ENCODE measurements at regions of chr4 and their contacts with region 1.

Region 1: DNA sequence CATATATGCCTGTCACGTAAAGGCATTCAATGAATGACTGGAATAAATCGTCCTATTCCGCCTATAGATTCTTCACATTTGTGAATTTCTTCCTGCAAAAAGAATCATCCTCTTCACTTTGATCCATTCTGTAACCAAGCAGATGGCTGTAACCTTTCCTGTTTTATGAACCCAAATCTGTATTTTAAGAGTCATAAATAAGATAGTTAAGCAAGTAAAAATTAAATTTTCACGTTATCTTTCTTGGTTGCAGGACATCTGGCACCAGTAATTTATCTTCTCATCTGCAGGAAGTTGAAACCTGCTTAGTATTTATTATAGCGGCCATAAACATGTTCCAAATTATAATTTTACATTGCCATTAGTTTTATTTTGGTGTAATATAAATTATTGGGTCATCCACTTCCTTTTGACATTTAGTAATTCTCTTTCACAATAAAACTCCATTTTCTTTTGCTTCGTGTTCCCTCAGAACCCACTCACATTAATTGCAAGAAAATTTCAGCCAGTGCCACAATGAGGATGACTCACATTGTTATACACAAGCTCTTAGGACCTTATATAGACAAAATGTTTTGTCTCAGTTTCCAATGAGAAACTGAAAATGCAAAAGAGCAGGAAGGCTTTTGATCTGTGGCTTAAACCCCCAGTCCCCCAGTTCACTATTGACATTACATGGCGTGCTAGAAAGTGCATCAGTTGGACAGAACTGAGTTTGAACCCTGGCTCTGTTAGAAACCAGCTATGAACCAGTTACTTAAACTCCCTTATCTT is 51.1 kb downstream of the TMEM156 start:
- DNase-seq: no peak
- H3K4me3 Mint-ChIP-seq: peak overlapping the region; percentile 25
- H3K27ac Mint-ChIP-seq: peak overlapping the region; percentile 81
- H3K4me1 Mint-ChIP-seq: peaks cover 59% of the 10 kb centered on the region
- H3K27me3 Mint-ChIP-seq: no peaks in the 10 kb centered on the region

Region 2: DNA sequence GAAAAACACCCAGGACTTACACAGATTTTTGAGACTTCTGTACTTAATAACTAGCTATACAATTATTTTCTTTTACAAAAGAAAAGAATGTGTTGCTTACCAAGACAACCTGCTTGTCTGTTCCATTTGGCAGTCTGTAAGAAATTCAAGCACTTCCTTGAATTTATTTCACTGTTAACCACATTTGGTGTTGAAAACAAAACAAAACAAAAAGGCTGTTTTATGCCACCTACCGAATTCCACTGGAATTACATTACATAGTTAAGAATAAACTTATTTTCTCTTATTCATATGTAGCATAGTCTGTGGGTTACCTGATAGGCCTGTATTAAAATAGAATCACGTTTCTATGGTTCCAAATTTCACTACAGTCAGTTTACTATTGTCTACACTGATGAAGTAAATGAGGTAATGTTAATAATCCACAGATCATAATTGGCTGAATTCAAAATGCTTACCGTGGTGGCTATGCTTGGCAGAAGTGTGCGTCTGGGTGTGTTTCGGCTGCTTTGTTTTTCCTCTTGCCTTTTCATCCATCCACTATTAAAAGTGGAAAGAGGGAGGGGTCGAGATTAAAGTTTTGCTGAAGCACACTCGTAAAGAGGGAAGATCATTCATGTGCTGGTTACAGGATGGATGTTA is 176.3 kb before region 1 on chr4 and contains the start of gene TLR1:
- intact Hi-C with region 1: loop called (anchors 5 kb)
- DNase-seq: no peak
- H3K4me3 Mint-ChIP-seq: peak within 1 kb of the TSS; percentile 81
- H3K27ac Mint-ChIP-seq: peak within 1 kb of the TSS; percentile 87
- H3K4me1 Mint-ChIP-seq: peaks cover 38% of the 10 kb centered on the region
- H3K27me3 Mint-ChIP-seq: no peaks in the 10 kb centered on the region
- total RNA-seq, gene TLR1: 1.9 and 2.7 TPM in 2 replicates

Region 3: DNA sequence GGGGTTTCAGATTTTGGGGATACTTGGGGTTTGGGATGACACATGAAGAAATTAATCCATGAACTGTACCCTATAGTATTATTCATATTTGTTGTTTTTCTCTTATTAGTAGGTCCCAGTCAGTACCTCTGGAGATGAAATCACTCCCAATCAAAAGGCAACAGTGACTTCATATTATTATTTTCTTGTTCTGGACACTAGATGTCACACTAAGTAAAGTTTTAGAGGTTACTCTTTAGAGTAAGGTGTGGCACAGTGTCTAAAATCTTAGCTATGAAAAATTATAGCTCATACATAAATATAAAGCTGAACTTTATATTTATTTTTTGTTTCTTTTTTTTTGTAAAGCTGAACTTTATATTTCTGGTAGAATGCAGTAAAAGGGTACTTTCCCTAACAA is 78.4 kb before region 1 on chr4:
- intact Hi-C with region 1: loop called (anchors 2 kb)
- DNase-seq: no peak
- H3K4me3 Mint-ChIP-seq: no peak overlapping the region
- H3K27ac Mint-ChIP-seq: no peak overlapping the region
- H3K4me1 Mint-ChIP-seq: peaks cover 35% of the 10 kb centered on the region
- H3K27me3 Mint-ChIP-seq: peaks cover 10% of the 10 kb centered on the region

Region 4: DNA sequence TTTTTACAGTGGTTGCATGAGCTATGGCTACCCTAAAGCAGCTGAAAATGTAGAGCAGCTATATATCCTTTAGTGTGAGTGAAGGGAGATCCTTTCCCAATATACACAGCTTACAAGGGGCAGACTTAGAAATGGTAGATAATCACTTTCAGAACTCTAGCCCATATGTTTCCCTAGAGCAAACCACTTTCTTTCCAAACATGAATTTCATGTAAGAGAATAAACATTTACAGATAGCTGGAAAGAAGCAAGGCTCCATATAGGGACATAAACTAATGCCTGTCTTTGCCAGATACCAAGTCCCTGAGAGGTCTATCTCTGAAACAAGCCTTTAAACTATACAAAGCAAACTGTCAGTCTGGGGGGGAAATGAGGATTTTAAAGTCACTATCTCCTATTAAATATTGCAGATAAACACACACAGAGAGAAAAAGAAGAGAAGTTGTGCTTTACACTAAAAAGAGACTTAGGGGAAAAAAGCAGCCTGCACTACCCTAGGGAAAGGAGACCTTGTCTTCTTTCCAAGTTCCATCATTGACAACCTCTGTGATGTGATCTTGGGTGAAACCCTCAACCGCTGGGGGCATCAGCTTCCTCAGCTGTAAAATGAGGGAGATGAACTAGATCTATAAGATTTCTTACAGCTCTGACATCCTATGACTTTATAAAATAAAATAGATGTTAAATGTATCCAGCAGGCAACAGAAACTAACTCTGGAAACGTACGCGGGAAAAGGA is 22.5 kb before region 1 on chr4:
- intact Hi-C with region 1: loop called (anchors 1 kb)
- DNase-seq: no peak
- H3K4me3 Mint-ChIP-seq: peak overlapping the region; percentile 46
- H3K27ac Mint-ChIP-seq: peak overlapping the region; percentile 96
- H3K4me1 Mint-ChIP-seq: peaks cover 62% of the 10 kb centered on the region
- H3K27me3 Mint-ChIP-seq: no peaks in the 10 kb centered on the region

Region 5: DNA sequence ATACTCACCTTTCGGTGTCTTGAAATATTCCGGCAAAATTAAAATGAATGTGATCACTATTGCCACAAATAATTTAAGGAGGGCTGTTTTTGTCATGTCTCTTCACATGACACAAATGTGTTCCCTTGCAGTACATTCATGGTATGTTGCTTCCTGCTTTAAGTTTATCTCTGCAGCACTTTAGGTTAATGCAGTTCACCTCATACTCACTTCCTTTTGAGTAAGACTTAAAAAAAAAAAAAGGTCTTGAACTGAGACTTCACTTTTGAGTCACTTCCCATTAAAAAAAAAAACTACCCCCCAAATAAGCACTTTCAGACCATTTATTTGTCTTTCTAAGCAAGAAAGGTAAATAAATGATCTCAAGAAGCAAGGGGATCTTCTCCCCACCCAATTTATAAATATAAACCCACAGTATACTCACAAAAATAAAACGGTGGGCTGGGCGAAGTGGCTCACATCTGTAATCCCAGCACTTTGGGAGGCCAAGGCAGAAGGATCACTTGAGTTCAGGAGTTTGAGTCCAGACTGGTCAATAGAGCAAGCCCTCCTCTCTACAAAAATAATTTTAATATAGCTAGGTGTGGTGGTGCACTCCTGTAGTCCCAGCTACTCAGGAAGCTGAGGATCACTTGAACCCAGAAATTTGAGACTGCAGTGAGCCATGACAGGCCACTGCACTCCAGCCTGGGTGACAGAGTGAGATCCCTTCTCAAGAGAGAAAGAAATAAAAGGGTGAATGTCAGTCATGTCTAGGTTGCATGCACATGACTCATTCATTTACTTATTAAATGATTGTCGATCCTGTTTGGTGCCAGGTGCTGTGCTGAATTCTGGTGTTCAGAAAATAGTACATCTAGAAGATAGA is 51.4 kb after region 1 on chr4 and contains the start of gene TMEM156:
- intact Hi-C with region 1: loop called (anchors 1 kb)
- DNase-seq: no peak
- H3K4me3 Mint-ChIP-seq: peak within 1 kb of the TSS; percentile 93
- H3K27ac Mint-ChIP-seq: peak within 1 kb of the TSS; percentile 87
- H3K4me1 Mint-ChIP-seq: peaks cover 46% of the 10 kb centered on the region
- H3K27me3 Mint-ChIP-seq: no peaks in the 10 kb centered on the region
- total RNA-seq, gene TMEM156: 27.7 and 29.4 TPM in 2 replicates

Region 6: DNA sequence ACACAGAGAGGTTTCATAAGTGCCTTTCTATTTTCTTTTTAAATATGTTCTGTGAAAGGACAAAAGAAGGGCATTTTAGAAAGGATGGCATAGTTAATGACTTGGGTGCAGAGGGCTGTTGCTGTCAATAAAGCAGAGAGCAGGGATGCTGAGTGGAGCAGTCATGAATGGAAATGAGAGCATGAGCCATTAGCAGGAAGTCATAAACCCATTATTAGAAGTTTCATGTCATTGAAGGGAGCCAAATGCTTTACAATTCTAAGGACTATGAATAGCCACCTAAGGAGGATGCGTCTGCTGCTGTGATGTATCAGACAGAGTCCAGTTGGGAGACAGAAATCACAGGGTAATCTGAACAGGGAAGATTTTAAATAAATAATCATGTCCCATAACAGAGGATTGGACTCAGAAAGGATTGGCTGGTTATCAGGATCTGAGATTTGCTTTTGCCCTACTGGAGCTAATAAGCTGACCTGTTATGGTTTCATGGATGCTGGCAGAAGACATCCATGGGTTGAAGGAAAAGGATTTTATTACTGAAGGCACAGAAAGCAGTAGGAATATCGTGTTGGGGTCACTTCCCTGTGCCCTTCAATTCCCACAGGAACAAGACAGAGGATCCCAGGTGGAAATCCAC is 153.7 kb after region 1 on chr4:
- intact Hi-C with region 1: loop called (anchors 2 kb)
- DNase-seq: no peak
- H3K4me3 Mint-ChIP-seq: no peak overlapping the region
- H3K27ac Mint-ChIP-seq: no peak overlapping the region
- H3K4me1 Mint-ChIP-seq: peaks cover 19% of the 10 kb centered on the region
- H3K27me3 Mint-ChIP-seq: no peaks in the 10 kb centered on the region

Region 7: DNA sequence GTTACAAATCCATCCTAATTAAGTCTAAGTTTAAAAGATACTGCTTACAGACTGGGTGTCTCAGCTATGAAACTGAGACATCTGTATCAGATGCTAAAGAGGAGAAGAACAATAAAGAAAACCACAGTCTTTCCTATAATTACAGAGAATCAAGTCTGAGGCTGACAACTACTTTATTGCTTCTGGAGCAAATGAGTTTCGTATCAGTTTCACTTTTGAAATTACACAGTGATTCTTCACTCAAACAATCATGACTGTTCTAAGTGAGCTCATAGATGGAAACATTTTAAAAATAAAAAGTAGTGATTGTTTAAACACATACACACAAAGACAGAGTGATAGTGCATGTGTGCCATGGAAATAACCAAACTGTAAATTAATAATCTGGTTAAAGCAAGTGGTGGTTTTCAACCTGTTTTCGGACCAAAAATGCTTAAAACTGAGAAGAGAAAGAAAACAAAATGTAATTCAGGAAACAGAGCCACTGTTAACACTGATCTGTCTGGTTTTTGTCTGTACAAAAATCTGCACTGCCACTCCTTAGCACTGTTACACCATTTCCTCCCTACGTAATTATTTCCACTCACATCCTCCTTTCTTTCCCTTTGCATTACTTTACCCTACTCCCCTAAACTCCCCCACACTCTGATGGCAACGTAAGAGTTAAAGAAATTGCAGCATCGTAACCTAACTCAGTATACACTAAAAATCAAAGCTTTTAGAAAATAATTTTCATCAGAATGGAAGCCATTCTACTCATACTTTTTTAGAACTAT is 372.6 kb after region 1 on chr4:
- intact Hi-C with region 1: loop called (anchors 5 kb)
- DNase-seq: peak; percentile 32
- H3K4me3 Mint-ChIP-seq: peak overlapping the region; percentile 80
- H3K27ac Mint-ChIP-seq: peak overlapping the region; percentile 96
- H3K4me1 Mint-ChIP-seq: peaks cover 63% of the 10 kb centered on the region
- H3K27me3 Mint-ChIP-seq: no peaks in the 10 kb centered on the region